ENCODE measurements at regions of chr2 and their contacts with region 1.

Region 1: DNA sequence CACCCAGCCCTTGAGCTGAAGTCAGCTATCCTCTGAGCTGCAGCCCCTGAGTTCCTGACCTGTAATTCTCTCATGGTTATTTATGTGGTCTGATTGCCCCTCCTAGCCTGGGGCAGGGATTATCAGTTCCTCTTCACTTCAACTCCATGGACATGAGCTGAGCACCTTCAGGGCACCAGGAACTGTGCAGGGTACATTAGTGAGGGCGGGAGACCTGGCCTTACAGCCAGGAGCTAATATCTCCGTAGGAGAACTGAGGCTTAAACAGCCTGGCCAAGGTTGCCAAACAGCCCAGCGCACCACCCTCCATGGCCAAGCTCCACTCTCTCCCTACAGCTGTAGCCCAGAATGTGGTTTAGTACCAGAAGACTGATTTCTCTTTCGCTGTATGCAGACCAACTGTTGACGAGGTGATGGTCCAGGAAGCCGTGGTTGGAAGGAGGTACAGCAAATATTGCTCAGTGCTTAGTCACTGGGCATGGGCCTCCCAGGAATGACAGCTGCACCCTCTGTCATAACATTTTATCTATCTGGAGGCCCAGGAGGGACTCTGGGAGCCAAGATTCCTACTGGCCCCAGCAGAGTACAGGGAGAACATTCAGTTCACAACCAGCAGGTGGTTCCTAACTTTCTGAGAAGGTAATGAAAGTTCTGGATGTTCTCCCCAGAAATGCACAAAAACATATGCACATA is 228.7 kb upstream of the SIX2 start:
- DNase-seq: peak; percentile 79
- H3K4me3 ChIP-seq: no peak overlapping the region
- H3K27ac ChIP-seq: peak overlapping the region; percentile 62
- H3K27me3 ChIP-seq: no peaks in the 10 kb centered on the region
- CTCF ChIP-seq: peak; percentile 50

Region 2: DNA sequence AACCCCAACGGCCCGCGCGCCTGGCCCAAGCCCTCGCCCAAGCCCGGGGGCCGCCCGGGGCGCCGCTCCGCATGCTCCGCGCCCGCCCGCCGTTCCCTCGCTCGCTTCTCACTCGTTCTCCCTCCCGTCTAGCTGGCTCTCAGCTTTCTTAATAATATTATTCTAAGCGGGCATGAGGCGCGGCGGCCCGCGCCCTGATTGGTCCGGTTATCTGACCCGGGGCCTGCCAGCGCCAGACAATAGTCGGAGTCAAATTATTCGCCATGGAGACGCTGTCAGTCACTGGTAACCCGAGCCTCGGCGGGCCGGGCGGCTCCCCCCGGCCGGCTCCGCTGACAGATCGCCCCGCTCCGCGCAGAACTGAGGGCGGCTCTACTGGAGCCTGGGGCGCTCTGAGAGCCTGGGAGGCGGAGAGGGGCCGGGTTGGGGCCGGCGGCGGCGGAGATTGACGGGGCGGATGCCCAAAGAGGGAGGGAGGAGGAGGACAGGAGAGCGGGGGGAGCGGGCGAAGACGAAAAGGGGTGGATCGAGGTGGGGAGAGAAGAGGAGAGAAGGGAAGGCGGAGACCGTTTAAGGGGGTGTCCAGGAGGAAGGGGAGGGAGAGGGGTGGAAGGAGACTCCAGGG is 228.6 kb before region 1 on chr2 and contains the start of gene SIX2:
- CTCF ChIA-PET with region 1: no interaction called
- POLR2A ChIA-PET with region 1: no interaction called
- DNase-seq: peak; percentile 41
- H3K4me3 ChIP-seq: peak within 1 kb of the TSS; percentile 34
- H3K27ac ChIP-seq: no peak within 1 kb of the TSS
- H3K27me3 ChIP-seq: peaks cover 93% of the 10 kb centered on the region
- CTCF ChIP-seq: no peak
- polyA plus RNA-seq, gene SIX2: not detected in 2 replicates

Region 3: DNA sequence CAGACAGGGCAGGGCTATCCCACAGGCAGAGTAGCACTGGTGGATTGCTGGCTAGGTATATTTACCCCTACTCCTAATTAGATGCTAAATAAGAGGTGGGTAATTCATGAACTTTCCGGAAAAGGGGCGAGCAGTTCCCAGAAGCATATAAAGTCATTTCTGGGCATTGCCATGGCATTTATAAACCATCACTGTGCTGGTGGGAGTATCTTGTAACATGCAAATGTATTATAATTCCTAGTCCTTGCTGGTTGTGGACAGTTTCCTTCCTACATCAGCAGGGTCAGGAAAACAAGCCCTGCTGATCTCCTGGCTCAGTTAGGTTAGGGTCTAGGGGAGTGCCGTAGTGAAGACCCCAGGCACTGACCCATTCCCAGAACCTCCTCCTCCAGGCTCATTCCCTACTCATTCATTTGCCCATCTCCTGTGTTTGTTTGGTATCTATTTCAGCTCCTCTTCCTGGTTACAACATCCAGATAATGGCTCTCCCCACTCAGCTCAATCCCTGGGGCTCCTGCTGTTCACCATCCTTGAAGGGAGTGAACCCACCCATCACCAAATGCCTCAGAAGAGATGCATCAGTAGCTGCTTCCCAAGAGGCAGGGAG is 90.4 kb after region 1 on chr2:
- CTCF ChIA-PET with region 1: no interaction called
- POLR2A ChIA-PET with region 1: interaction called, 13 read pairs
- DNase-seq: no peak
- H3K4me3 ChIP-seq: no peak overlapping the region
- H3K27ac ChIP-seq: no peak overlapping the region
- H3K27me3 ChIP-seq: peaks cover 16% of the 10 kb centered on the region
- CTCF ChIP-seq: no peak